HAP-1 (cell line): ENCODE measurements at regions of chr13 and their contacts with region 1.

Region 1: DNA sequence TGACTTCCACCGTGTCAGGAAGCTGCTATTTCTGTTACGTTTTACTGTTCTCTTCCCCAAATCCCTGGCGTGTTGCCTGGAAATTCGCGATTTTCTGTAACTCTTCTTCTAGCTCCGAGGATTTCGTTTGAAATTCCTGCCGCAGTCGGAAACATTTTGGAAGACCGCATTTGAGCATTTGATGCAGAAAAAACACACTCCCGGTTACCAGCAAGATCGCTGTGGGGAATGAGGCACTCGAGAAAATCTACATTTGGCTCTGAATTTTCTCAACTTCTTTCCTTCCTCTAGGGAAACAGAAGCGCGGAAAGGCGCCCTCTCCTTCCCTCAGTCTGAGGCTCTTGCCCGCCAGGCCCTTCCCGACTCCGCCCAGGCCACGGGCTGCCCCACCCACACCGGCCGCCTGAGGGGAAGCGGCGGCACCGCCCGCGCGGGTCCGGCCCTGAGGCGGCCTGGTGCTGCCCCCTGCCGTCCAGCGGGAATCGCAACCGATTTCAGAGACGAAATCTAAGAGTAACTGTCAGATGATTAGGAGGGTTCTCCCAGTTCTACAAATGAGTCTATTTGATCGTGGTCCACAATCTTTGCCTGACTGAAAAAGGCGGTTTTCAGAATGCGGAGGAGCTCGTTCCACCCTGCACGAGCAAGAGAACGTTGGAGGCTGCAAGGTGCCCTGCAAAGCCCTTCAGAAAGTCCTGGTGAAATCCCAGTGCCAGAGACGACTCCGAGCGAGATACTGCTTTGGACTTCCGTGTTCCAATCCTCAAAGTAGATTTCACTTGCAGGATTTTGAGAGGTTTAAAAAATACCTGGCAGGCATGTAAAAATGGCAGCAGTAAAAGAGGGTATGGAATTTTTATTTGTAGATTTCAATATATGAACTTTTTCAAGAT is 18.4 kb upstream of the TUBGCP3 start:
- DNase-seq: peak; percentile 86 to 96
- H3K4me3 ChIP-seq: peak overlapping the region; percentile 26
- H3K4me1 ChIP-seq: peaks cover 8% of the 10 kb centered on the region
- H3K27me3 ChIP-seq: peaks cover 14% of the 10 kb centered on the region

Region 2: GRCh38 chr13:111474136-111475002 is 1132.0 kb before region 1 on chr13:
- in situ Hi-C with region 1: loop called (anchors 10 kb)
- DNase-seq: peak; percentile 35 to 53
- H3K4me3 ChIP-seq: no peak overlapping the region
- H3K4me1 ChIP-seq: no peaks in the 10 kb centered on the region
- H3K27me3 ChIP-seq: no peaks in the 10 kb centered on the region

Region 3: GRCh38 chr13:112066624-112067004 is 539.7 kb before region 1 on chr13:
- in situ Hi-C with region 1: loop called (anchors 25 kb)
- DNase-seq: peak; percentile 12 to 75
- H3K4me3 ChIP-seq: no peak overlapping the region
- H3K4me1 ChIP-seq: no peaks in the 10 kb centered on the region
- H3K27me3 ChIP-seq: peaks cover 38% of the 10 kb centered on the region